Caco-2 (cell line): ENCODE measurements at regions of chr13 and their contacts with region 1.

Region 1: GRCh38 chr13:93233997-93234416 is 7.4 kb downstream of the GPC6 start:
- DNase-seq: peak in 1 of 2 experiments; percentile 32
- H3K4me3 ChIP-seq: no peak overlapping the region
- H3K4me3 Mint-ChIP-seq: no peak overlapping the region
- H3K27ac Mint-ChIP-seq: no peak overlapping the region
- H3K4me1 ChIP-seq: peaks cover 31% of the 10 kb centered on the region
- H3K4me1 Mint-ChIP-seq: peaks cover 4% of the 10 kb centered on the region
- H3K27me3 ChIP-seq: no peaks in the 10 kb centered on the region
- H3K27me3 Mint-ChIP-seq: no peaks in the 10 kb centered on the region
- CTCF ChIP-seq: peak; percentile 41 to 53

Region 2: DNA sequence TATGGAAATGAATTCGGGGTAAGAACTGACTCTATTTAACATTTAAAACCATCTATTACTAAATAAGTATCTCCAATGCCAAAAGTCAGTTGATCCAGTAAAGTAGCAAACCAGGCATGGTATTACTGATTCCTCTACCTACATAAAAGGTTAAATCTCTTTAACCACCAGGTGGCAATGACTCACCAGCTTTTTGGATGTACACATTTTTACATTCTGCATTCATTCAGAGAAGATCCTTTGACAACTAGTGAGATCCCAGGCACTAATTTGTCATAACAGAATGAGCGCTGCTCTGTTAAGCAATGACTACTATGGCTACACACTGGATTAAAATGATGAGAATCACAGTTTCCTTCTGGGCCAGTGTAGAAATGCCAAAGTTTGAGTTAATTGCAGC is 337.2 kb before region 1 on chr13:
- CTCF ChIA-PET with region 1: no interaction called
- POLR2A ChIA-PET with region 1: no interaction called
- intact Hi-C with region 1: loop called (anchors 5 kb)
- DNase-seq: peak in 1 of 2 experiments; percentile 22
- H3K4me3 ChIP-seq: no peak overlapping the region
- H3K4me3 Mint-ChIP-seq: no peak overlapping the region
- H3K27ac Mint-ChIP-seq: no peak overlapping the region
- H3K4me1 ChIP-seq: no peaks in the 10 kb centered on the region
- H3K4me1 Mint-ChIP-seq: no peaks in the 10 kb centered on the region
- H3K27me3 ChIP-seq: no peaks in the 10 kb centered on the region
- H3K27me3 Mint-ChIP-seq: peaks cover 3% of the 10 kb centered on the region
- CTCF ChIP-seq: peak; percentile 32 to 49

Region 3: GRCh38 chr13:92967923-92968322 is 266.1 kb before region 1 on chr13:
- CTCF ChIA-PET with region 1: no interaction called
- POLR2A ChIA-PET with region 1: no interaction called
- intact Hi-C with region 1: loop called (anchors 1 kb)
- DNase-seq: peak in 1 of 2 experiments; percentile 11
- H3K4me3 ChIP-seq: no peak overlapping the region
- H3K4me3 Mint-ChIP-seq: no peak overlapping the region
- H3K27ac Mint-ChIP-seq: no peak overlapping the region
- H3K4me1 ChIP-seq: no peaks in the 10 kb centered on the region
- H3K4me1 Mint-ChIP-seq: no peaks in the 10 kb centered on the region
- H3K27me3 ChIP-seq: no peaks in the 10 kb centered on the region
- H3K27me3 Mint-ChIP-seq: no peaks in the 10 kb centered on the region
- CTCF ChIP-seq: peak; percentile 17 to 46

Region 4: DNA sequence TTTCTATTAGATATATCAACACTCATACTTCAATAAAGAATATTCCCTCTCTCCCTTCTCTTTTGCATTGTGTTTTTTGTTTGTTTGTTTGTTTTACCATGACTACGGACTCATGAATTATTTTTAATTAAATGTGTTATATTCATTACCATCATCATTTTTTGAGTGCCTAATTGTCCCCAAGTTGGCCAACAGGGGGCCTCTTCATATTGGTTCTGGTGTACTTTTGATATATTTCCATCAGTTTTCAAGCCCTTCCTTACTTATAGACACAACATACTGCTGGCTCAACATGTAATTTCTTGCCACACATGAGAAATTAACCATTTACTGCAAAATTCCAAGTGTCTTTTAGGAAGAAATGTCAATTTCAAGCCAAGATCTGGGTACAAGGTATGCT is 61.9 kb before region 1 on chr13:
- CTCF ChIA-PET with region 1: interaction called, 3 read pairs
- POLR2A ChIA-PET with region 1: no interaction called
- intact Hi-C with region 1: loop called (anchors 1 kb)
- DNase-seq: peak in 1 of 2 experiments; percentile 10
- H3K4me3 ChIP-seq: no peak overlapping the region
- H3K4me3 Mint-ChIP-seq: no peak overlapping the region
- H3K27ac Mint-ChIP-seq: no peak overlapping the region
- H3K4me1 ChIP-seq: no peaks in the 10 kb centered on the region
- H3K4me1 Mint-ChIP-seq: no peaks in the 10 kb centered on the region
- H3K27me3 ChIP-seq: no peaks in the 10 kb centered on the region
- H3K27me3 Mint-ChIP-seq: peaks cover 4% of the 10 kb centered on the region
- CTCF ChIP-seq: peak in 1 of 2 experiments; percentile 38

Region 5: GRCh38 chr13:93193682-93194081 is 40.3 kb before region 1 on chr13:
- CTCF ChIA-PET with region 1: no interaction called
- POLR2A ChIA-PET with region 1: no interaction called
- intact Hi-C with region 1: loop called (anchors 2 kb)
- DNase-seq: no peak
- H3K4me3 ChIP-seq: no peak overlapping the region
- H3K4me3 Mint-ChIP-seq: no peak overlapping the region
- H3K27ac Mint-ChIP-seq: no peak overlapping the region
- H3K4me1 ChIP-seq: no peaks in the 10 kb centered on the region
- H3K4me1 Mint-ChIP-seq: no peaks in the 10 kb centered on the region
- H3K27me3 ChIP-seq: no peaks in the 10 kb centered on the region
- H3K27me3 Mint-ChIP-seq: no peaks in the 10 kb centered on the region
- CTCF ChIP-seq: no peak

Region 6: GRCh38 chr13:93270769-93271742 is 37.0 kb after region 1 on chr13:
- CTCF ChIA-PET with region 1: no interaction called
- POLR2A ChIA-PET with region 1: no interaction called
- intact Hi-C with region 1: no loop called
- DNase-seq: peak in 1 of 2 experiments; percentile 23
- H3K4me3 ChIP-seq: no peak overlapping the region
- H3K4me3 Mint-ChIP-seq: peak overlapping the region; percentile 26
- H3K27ac Mint-ChIP-seq: peak overlapping the region; percentile 37
- H3K4me1 ChIP-seq: peaks cover 21% of the 10 kb centered on the region
- H3K4me1 Mint-ChIP-seq: no peaks in the 10 kb centered on the region
- H3K27me3 ChIP-seq: no peaks in the 10 kb centered on the region
- H3K27me3 Mint-ChIP-seq: no peaks in the 10 kb centered on the region
- CTCF ChIP-seq: no peak